ENCODE measurements at regions of chr13 and their contacts with region 1.

Region 1: GRCh38 chr13:96817336-96817941 is 176.8 kb downstream of the OXGR1 start:
- DNase-seq: peak; percentile 37
- ATAC-seq: no peak
- H3K4me3 ChIP-seq: no peak overlapping the region
- H3K27ac ChIP-seq: no peak overlapping the region
- H3K4me1 ChIP-seq: no peaks in the 10 kb centered on the region
- H3K27me3 ChIP-seq: no peaks in the 10 kb centered on the region
- CTCF ChIP-seq: peak; percentile 42 to 58 (median 48); a peak in 4 of 6 replicates
- POLR2A ChIP-seq: no peak
- RAD21 ChIP-seq: peak; percentile 61

Region 2: DNA sequence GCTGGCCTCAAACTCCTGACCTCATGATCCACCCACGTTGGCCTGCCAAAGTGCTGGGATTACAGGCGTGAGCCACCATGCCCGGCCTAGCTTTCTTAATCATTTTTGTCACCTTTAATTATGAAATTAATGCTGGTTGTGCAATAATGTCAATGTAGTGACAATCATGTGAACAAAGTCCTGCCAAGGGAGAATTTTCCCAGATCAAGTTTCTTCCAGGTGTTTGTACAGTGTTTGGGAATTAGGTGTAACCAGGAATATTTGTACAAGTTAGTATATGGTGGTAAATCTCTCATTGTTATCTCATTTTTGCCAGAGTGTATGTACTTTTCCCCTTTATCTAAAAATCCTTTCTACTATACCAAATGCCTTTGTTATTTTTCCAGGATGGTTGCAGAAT is 935.3 kb before region 1 on chr13:
- CTCF ChIA-PET with region 1: no interaction called
- POLR2A ChIA-PET with region 1: no interaction called
- RAD21 ChIA-PET with region 1: no interaction called
- intact Hi-C with region 1: no loop called
- DNase-seq: no peak
- ATAC-seq: no peak
- H3K4me3 ChIP-seq: no peak overlapping the region
- H3K27ac ChIP-seq: no peak overlapping the region
- H3K4me1 ChIP-seq: no peaks in the 10 kb centered on the region
- H3K27me3 ChIP-seq: no peaks in the 10 kb centered on the region
- CTCF ChIP-seq: no peak
- POLR2A ChIP-seq: no peak
- RAD21 ChIP-seq: no peak

Region 3: DNA sequence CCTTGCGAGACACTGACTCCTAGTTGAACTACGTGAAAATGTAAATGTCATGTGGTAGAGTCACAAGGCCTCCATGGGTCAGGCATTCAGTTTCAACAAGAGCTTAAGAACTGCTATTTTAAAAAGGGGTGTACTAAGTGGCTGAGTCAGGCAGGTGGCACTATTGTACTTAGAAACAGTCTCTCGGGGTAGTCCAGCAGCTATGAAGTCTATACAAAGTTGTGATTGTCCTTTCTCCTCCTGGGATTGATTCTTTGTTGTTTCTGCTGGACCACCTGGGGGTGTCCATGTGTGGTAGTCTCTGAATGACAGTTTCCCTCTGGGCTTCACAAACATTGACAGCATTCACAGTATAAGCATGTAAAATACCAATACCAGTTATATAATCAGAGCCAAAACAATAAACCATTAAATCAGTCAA is 797.3 kb before region 1 on chr13:
- CTCF ChIA-PET with region 1: interaction called, 89 read pairs
- POLR2A ChIA-PET with region 1: no interaction called
- RAD21 ChIA-PET with region 1: interaction called in 1 of 2 experiments, 3 read pairs
- intact Hi-C with region 1: loop called (anchors 1 kb)
- DNase-seq: peak; percentile 56
- ATAC-seq: peak; percentile 95
- H3K4me3 ChIP-seq: no peak overlapping the region
- H3K27ac ChIP-seq: no peak overlapping the region
- H3K4me1 ChIP-seq: no peaks in the 10 kb centered on the region
- H3K27me3 ChIP-seq: no peaks in the 10 kb centered on the region
- CTCF ChIP-seq: peak; percentile 57 to 70 (median 58); a peak in 5 of 6 replicates
- POLR2A ChIP-seq: no peak
- RAD21 ChIP-seq: peak; percentile 78

Region 4: DNA sequence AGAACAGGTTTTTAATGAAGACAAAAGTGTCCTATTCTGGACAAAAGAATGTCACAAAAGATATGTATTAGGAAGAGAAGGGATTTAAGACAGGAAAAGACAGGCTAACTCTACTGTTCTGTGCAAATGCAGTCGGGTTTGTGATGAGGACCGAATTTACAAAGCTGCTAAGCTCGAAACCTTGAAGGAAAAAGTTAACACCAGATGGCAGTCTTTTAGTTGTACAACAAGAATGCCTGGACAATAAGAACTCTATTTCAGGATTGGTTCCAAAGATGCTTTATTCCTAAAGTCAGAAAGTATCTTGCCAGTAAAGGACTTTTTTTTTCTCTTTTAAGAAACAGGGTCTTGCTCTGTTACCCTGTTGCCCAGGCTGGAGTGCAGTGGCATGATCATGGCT is 676.4 kb before region 1 on chr13:
- CTCF ChIA-PET with region 1: interaction called, 20 read pairs
- POLR2A ChIA-PET with region 1: no interaction called
- RAD21 ChIA-PET with region 1: interaction called in 1 of 2 experiments, 4 read pairs
- intact Hi-C with region 1: loop called (anchors 1 kb)
- DNase-seq: no peak
- ATAC-seq: peak; percentile 42; the same call in 1 of the 2 replicates
- H3K4me3 ChIP-seq: no peak overlapping the region
- H3K27ac ChIP-seq: no peak overlapping the region
- H3K4me1 ChIP-seq: no peaks in the 10 kb centered on the region
- H3K27me3 ChIP-seq: peaks cover 5% of the 10 kb centered on the region; the same call in 1 of the 2 replicates
- CTCF ChIP-seq: peak in 2 of 3 experiments; percentile 28 to 30; a peak in 2 of 6 replicates
- POLR2A ChIP-seq: no peak
- RAD21 ChIP-seq: peak; percentile 38; the same call in 1 of the 2 replicates

Region 5: DNA sequence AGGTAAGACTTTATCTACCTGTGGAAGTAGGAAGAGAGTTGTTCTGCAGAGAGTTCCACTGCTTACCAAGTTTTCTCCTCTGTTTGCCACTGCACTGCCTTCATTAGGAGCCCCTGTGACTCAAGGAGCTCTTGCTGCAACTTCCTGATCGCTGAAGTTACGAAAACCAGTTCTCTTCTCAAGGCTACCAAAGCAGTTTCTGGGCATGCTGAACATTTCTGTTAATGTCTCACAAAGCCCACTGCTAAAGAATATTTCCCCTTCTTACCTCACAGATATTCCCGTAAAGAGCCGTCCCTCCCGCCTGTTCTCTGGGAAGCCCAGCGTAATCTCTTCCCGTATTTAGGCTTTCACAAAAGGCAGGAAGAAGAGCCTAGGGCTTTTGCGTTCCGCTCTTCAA is 259.5 kb after region 1 on chr13:
- CTCF ChIA-PET with region 1: no interaction called
- POLR2A ChIA-PET with region 1: no interaction called
- RAD21 ChIA-PET with region 1: no interaction called
- intact Hi-C with region 1: no loop called
- DNase-seq: no peak
- ATAC-seq: no peak
- H3K4me3 ChIP-seq: no peak overlapping the region
- H3K27ac ChIP-seq: no peak overlapping the region
- H3K4me1 ChIP-seq: no peaks in the 10 kb centered on the region
- H3K27me3 ChIP-seq: no peaks in the 10 kb centered on the region
- CTCF ChIP-seq: no peak
- POLR2A ChIP-seq: no peak
- RAD21 ChIP-seq: no peak

Measured in HCT116 (cell line).